Activated CD4-positive, alpha-beta T cell treated with anti-CD3 and anti-CD28 coated beads, Interleukin-2, amount 10 ng/mL, durations not matched to agents 7 days and 5 days (primary cell): ENCODE measurements at regions of chr5 and their contacts with region 1.

Region 1: DNA sequence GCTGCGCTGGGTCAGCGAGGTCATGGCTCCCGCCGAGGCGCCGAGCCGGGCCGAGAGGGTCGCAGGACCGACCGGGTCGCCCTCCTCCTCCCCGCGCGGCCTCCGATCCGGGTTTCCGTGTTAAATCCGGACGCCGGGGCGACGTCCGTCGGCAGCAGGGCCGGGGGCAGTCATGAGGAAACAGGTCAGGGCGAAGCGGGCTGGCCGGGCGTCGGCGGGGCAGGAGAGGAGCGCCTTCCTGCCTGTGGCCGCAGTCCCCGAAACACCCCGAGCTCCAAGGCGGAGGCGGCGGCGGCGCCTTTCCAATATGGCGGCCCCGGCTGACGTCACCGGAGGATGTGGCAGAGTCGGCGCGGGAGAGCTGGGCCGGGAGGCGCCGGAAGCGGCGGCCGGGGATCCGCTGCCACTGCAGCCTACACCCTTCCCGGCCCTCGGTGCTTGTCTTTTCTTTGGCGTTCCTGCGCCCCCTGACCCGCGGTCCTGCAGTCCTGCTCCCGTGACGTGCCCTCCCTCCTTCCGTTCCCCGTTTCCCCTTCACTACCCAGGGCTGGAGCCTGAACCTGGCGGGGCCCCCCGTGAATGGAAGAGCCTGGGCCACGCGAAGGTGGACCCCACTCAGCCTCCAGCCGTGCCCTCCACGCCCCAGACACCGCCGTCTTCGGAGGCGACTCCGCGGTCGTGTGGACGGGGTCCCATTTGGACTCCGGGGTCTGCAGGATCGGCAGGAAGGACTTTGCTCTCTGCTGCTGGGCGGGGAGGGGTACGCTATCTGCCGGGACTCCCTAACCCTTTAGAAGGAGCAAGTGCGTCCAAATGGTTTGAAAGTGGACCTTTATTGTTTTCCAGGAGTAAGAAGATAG is at the start of gene GOLPH3:
- DNase-seq: peak; percentile 94
- H3K4me3 Mint-ChIP-seq: peak within 1 kb of the TSS; percentile 96
- H3K27ac Mint-ChIP-seq: peak within 1 kb of the TSS; percentile 99
- H3K4me1 Mint-ChIP-seq: peaks cover 35% of the 10 kb centered on the region
- H3K27me3 Mint-ChIP-seq: peaks cover 6% of the 10 kb centered on the region
- total RNA-seq, gene GOLPH3: 67.3 to 71.3 TPM

Region 2: DNA sequence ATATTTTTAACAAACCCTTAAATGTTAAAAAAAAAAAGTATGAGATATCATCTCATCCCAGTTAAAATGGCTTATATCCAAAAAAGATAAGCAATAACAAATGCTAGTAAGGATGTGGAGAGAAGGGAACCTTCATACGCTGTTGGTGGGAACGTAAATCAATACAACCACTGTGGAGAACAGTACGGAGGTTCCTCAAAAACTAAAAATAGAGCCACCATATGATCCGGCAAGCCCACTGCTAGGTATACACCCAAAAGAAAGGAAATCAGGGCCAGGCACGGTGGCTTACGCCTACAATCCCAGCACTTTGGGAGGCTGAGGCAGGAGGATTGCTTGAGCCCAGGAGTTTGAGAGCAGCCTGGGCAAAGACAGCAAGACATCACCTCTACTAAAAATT is 135.5 kb after region 1 on chr5:
- CTCF ChIA-PET with region 1: interaction called, 3 read pairs
- POLR2A ChIA-PET with region 1: interaction called, 11 read pairs
- DNase-seq: no peak
- H3K4me3 Mint-ChIP-seq: no peak overlapping the region
- H3K27ac Mint-ChIP-seq: no peak overlapping the region
- H3K4me1 Mint-ChIP-seq: peaks cover 45% of the 10 kb centered on the region
- H3K27me3 Mint-ChIP-seq: no peaks in the 10 kb centered on the region